Activated CD4-positive, alpha-beta memory T cell treated with anti-CD3 and anti-CD28 coated beads for 36 hours (primary cell): ENCODE measurements at regions of chr10 and their contacts with region 1.

Region 1: GRCh38 chr10:99711129-99711719 is 20.7 kb downstream of the COX15 start:
- DNase-seq: peak; percentile 31
- H3K4me3 Mint-ChIP-seq: no peak overlapping the region
- H3K27ac Mint-ChIP-seq: no peak overlapping the region
- H3K4me1 Mint-ChIP-seq: peaks cover 11% of the 10 kb centered on the region
- H3K27me3 Mint-ChIP-seq: no peaks in the 10 kb centered on the region

Region 2: GRCh38 chr10:99435986-99436638 is 275.1 kb before region 1 on chr10:
- CTCF ChIA-PET with region 1: interaction called, 9 read pairs
- POLR2A ChIA-PET with region 1: no interaction called
- intact Hi-C with region 1: loop called (anchors 1 kb)
- DNase-seq: no peak
- H3K4me3 Mint-ChIP-seq: no peak overlapping the region
- H3K27ac Mint-ChIP-seq: no peak overlapping the region
- H3K4me1 Mint-ChIP-seq: peaks cover 18% of the 10 kb centered on the region
- H3K27me3 Mint-ChIP-seq: no peaks in the 10 kb centered on the region

Region 3: GRCh38 chr10:99560277-99561126 is 150.7 kb before region 1 on chr10:
- CTCF ChIA-PET with region 1: interaction called, 32 read pairs
- POLR2A ChIA-PET with region 1: no interaction called
- intact Hi-C with region 1: loop called (anchors 1 kb)
- DNase-seq: peak; percentile 45
- H3K4me3 Mint-ChIP-seq: no peak overlapping the region
- H3K27ac Mint-ChIP-seq: no peak overlapping the region
- H3K4me1 Mint-ChIP-seq: peaks cover 9% of the 10 kb centered on the region
- H3K27me3 Mint-ChIP-seq: peaks cover 16% of the 10 kb centered on the region

Region 4: DNA sequence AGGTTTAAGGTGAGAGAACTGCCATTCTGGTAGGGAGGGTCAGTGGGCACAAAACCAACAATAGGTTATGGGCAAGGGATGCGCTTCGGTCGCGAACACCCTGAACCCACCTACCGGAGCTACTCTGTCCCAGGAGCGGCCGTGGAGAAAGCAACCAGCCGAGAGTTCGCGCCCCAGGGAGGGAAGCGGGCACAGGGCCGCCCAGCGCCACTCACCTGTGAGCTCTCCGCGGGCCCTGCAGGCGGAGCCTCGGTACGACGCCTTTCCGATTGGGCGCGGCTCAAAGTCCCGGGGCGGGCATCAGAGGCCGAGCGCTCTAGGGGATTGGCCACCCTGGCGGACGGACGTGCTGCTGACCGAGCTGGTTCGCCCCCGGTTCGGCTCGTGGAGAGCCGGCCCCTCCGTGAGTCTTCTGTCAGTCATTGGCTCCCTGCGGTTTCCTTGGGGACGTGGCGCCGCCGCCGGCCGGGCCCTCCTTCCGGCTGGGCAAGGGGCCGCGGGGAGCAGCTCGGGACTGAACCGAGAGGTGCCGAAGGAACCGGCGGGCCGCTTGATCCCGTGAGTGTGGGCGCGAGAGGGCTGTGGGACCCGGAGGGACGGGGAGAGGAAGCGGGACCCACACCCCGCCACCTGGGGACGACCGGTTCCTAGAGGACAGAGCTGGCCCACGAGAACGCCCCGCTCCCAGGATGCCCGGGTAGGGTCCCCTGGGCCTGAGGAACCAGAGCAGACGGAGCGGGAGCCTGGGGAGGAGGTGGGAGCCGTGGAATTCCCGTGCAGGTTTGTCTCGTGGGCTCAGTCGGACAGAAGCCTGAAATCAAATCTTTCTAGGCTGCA is 52.0 kb before region 1 on chr10 and contains the start of gene ENTPD7:
- CTCF ChIA-PET with region 1: interaction called, 7 read pairs
- POLR2A ChIA-PET with region 1: interaction called, 4 read pairs
- intact Hi-C with region 1: loop called (anchors 2 kb)
- DNase-seq: peak; percentile 96
- H3K4me3 Mint-ChIP-seq: peak within 1 kb of the TSS; percentile 83
- H3K27ac Mint-ChIP-seq: peak within 1 kb of the TSS; percentile 84
- H3K4me1 Mint-ChIP-seq: peaks cover 18% of the 10 kb centered on the region
- H3K27me3 Mint-ChIP-seq: peaks cover 18% of the 10 kb centered on the region
- total RNA-seq, gene ENTPD7: 3.0 to 3.3 TPM

Region 5: GRCh38 chr10:99698504-99699080 is 12.6 kb before region 1 on chr10:
- CTCF ChIA-PET with region 1: no interaction called
- POLR2A ChIA-PET with region 1: no interaction called
- intact Hi-C with region 1: loop called (anchors 1 kb)
- DNase-seq: no peak
- H3K4me3 Mint-ChIP-seq: no peak overlapping the region
- H3K27ac Mint-ChIP-seq: no peak overlapping the region
- H3K4me1 Mint-ChIP-seq: no peaks in the 10 kb centered on the region
- H3K27me3 Mint-ChIP-seq: no peaks in the 10 kb centered on the region